Calu3 (cell line): ENCODE measurements at regions of chr10 and their contacts with region 1.

Region 1: DNA sequence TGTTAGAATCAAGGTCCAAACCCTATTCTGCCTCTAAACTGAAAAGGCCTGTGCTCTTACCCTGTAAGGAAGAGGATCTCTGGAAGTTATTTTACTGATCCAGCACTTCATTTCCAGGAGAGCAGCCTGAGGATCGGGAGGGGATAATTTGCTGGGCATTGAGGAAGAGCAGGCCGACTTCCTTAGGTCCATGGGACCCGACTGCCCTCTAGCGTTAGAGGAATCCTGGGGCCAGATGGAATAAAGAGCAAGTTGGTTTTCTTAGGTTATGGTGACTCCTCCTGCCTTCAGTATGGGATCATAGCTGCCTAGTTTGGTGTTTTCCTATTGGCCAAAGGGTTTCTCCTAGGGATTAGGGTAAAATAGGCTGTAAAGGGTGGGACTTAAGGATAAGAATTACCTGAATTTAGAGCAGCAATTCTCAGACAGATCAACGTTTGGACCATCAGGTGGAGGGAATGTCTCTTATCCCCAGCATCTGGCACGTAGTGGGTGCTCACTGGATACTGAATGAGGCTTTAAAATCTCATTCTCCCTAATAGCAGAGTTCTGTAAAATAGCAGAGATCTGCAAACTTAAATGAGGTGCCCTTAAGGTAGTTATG is 40.0 kb upstream of the SORBS1 start:
- DNase-seq: peak; percentile 73
- H3K4me3 Mint-ChIP-seq: no peak overlapping the region
- H3K27ac Mint-ChIP-seq: no peak overlapping the region
- H3K4me1 Mint-ChIP-seq: no peaks in the 10 kb centered on the region
- H3K27me3 Mint-ChIP-seq: peaks cover 18% of the 10 kb centered on the region
- CTCF ChIP-seq: peak; percentile 73

Region 2: DNA sequence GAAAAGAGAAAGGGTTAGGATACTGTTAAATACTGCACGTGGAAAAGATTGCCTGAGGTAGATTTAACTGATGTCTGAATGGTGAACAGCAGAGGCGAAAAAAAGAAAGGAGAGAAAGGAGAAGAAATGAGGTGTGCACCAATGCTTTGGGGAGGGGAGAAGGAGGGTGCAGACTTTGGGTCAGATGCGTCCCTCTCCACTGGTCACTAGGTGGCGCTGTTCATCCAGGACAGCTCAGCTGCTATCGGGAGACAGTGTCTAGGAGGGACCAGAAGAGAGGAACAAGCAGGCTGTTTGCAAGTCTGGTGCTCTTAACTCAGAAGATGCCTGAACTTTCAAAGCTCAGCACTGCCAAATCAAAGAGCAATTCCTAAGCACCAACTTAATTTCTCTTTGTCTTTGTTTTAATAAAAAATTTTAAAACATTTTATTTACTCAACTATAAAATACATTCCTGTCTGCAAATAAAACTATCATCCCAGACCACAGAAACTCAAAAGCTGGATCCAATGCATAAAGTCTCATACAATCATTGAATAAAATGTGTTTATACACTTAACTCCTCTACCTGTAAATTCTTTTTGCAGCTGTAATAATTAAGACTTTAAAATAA is 226.5 kb before region 1 on chr10:
- CTCF ChIA-PET with region 1: interaction called, 13 read pairs
- intact Hi-C with region 1: loop called (anchors 1 kb)
- DNase-seq: peak; percentile 73
- H3K4me3 Mint-ChIP-seq: no peak overlapping the region
- H3K27ac Mint-ChIP-seq: no peak overlapping the region
- H3K4me1 Mint-ChIP-seq: no peaks in the 10 kb centered on the region
- H3K27me3 Mint-ChIP-seq: peaks cover 22% of the 10 kb centered on the region
- CTCF ChIP-seq: peak; percentile 55

Region 3: GRCh38 chr10:95408983-95409873 is 192.0 kb before region 1 on chr10:
- CTCF ChIA-PET with region 1: interaction called, 12 read pairs
- intact Hi-C with region 1: no loop called
- DNase-seq: peak; percentile 18
- H3K4me3 Mint-ChIP-seq: no peak overlapping the region
- H3K27ac Mint-ChIP-seq: peak overlapping the region; percentile 72
- H3K4me1 Mint-ChIP-seq: peaks cover 18% of the 10 kb centered on the region
- H3K27me3 Mint-ChIP-seq: no peaks in the 10 kb centered on the region
- CTCF ChIP-seq: no peak

Region 4: GRCh38 chr10:95430231-95430951 is 170.8 kb before region 1 on chr10:
- CTCF ChIA-PET with region 1: interaction called, 7 read pairs
- intact Hi-C with region 1: loop called (anchors 1 kb)
- DNase-seq: peak; percentile 45
- H3K4me3 Mint-ChIP-seq: no peak overlapping the region
- H3K27ac Mint-ChIP-seq: no peak overlapping the region
- H3K4me1 Mint-ChIP-seq: no peaks in the 10 kb centered on the region
- H3K27me3 Mint-ChIP-seq: peaks cover 7% of the 10 kb centered on the region
- CTCF ChIP-seq: peak; percentile 80

Region 5: GRCh38 chr10:95656291-95657164 is 55.3 kb after region 1 on chr10 and contains the start of gene ALDH18A1:
- CTCF ChIA-PET with region 1: no interaction called
- intact Hi-C with region 1: no loop called
- DNase-seq: peak; percentile 86
- H3K4me3 Mint-ChIP-seq: peak within 1 kb of the TSS; percentile 100
- H3K27ac Mint-ChIP-seq: peak within 1 kb of the TSS; percentile 96
- H3K4me1 Mint-ChIP-seq: no peaks in the 10 kb centered on the region
- H3K27me3 Mint-ChIP-seq: no peaks in the 10 kb centered on the region
- CTCF ChIP-seq: no peak
- total RNA-seq, gene ALDH18A1: 50.1 and 55.8 TPM in 2 replicates